ENCODE measurements at regions of chr19 and their contacts with region 1.

Region 1: GRCh38 chr19:35135389-35135909 is 590 bp upstream of the LGI4 start:
- DNase-seq: peak; percentile 80 to 87 (median 84)
- H3K4me3 ChIP-seq: peak overlapping the region in 58 of 59 donors; percentile 20 to 62 (median 49)
- H3K27ac ChIP-seq: peak overlapping the region in 58 of 59 donors; percentile 78 to 99 (median 94)
- H3K27me3 ChIP-seq: peaks cover 0 to 3% (median 0%) of the 10 kb centered on the region in 45 donors
- CTCF ChIP-seq: peak; percentile 76 to 99 (median 95)

Region 2: GRCh38 chr19:35044317-35045117 is 90.9 kb before region 1 on chr19:
- intact Hi-C with region 1: loop called in 1 of 2 experiments (anchors 5 kb)
- DNase-seq: peak in 9 of 10 donors; percentile 73 to 84 (median 79)
- H3K4me3 ChIP-seq: no peak overlapping the region
- H3K27ac ChIP-seq: peak overlapping the region in 53 of 59 donors; percentile 7 to 99 (median 74)
- H3K27me3 ChIP-seq: no peaks in the 10 kb centered on the region
- CTCF ChIP-seq: peak; percentile 92 to 100 (median 98)

Region 3: DNA sequence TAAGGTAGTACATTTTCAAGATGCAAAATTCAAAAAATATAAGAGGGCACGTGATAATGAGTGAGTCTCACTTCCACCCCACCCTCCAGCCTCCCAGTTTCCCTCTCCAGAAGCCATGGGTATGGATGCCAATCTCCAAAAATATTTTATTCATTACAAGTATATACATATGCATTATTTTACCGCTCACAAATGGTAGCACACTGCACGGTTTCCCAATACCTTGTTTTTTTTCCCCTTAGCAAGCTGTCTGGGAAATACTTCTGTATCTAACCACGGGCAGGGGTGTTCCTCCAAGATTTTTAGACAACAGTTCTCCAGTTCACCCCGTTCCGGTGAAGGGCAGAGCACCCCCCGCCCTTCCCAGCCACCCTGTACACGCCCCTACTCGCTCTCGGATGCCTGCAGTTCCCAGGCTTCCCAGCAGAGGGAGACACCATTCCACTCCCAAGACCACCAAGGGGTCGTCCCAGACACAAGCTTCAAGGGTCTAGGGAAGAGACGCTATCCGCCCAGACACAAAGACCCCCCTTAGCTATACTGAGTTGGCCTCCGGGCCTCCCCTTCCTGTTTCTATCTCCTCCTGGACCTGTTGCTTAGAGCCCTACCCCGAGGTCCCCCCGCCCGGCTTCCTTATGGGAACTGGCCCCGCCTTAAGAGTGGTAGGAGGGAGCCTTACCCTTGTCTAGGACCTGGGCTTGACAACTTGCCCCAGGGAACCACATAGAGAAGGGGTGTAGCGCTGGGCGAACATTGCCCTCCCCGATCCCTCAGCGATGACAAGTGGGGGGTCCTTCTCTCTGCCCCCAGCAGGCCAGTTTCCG is 20.9 kb before region 1 on chr19:
- intact Hi-C with region 1: loop called (anchors 1 to 2 kb)
- DNase-seq: peak in 8 of 10 donors; percentile 65 to 84 (median 79)
- H3K4me3 ChIP-seq: peak overlapping the region in 57 of 59 donors; percentile 2 to 65 (median 45)
- H3K27ac ChIP-seq: peak overlapping the region; percentile 78 to 99 (median 96)
- H3K27me3 ChIP-seq: no peaks in the 10 kb centered on the region
- CTCF ChIP-seq: peak; percentile 64 to 99 (median 96)

Region 4: DNA sequence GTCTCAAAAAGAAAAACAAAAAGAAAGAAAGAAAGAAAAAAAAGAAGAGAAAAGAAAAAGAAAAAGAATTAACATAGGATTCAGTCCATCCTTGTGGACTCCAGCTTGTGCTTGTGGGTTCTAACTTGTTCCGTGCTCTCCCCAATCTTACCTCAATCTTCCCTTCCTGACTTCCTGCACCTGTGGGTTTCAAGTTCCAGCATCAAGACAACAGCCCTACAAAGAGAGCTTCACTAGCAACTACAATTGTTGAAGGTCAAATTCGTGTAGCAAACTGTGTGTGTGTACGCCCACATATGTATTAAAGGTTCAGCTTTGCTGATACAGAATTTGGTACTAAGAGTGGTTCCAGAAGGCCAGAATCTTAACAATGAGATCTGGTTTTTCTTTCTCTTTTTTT is 44.4 kb after region 1 on chr19:
- intact Hi-C with region 1: no loop called
- DNase-seq: no peak
- H3K4me3 ChIP-seq: no peak overlapping the region
- H3K27ac ChIP-seq: no peak overlapping the region
- H3K27me3 ChIP-seq: peaks cover 0 to 3% (median 0%) of the 10 kb centered on the region in 45 donors
- CTCF ChIP-seq: no peak